ENCODE measurements at regions of chr16 and their contacts with region 1.

Region 1: GRCh38 chr16:28140788-28141618 is 70.8 kb downstream of the XPO6 start:
- DNase-seq: peak; percentile 91
- H3K4me3 Mint-ChIP-seq: peak overlapping the region; percentile 70
- H3K27ac Mint-ChIP-seq: peak overlapping the region; percentile 97
- H3K4me1 Mint-ChIP-seq: peaks cover 87% of the 10 kb centered on the region
- H3K27me3 Mint-ChIP-seq: no peaks in the 10 kb centered on the region

Region 2: GRCh38 chr16:28181515-28181914 is 40.5 kb after region 1 on chr16:
- CTCF ChIA-PET with region 1: interaction called, 4 read pairs
- intact Hi-C with region 1: loop called (anchors 1 kb)
- DNase-seq: no peak
- H3K4me3 Mint-ChIP-seq: no peak overlapping the region
- H3K27ac Mint-ChIP-seq: peak overlapping the region; percentile 91
- H3K4me1 Mint-ChIP-seq: peaks cover 80% of the 10 kb centered on the region
- H3K27me3 Mint-ChIP-seq: no peaks in the 10 kb centered on the region

Region 3: GRCh38 chr16:28193530-28194423 is 52.8 kb after region 1 on chr16:
- CTCF ChIA-PET with region 1: interaction called, 8 read pairs
- intact Hi-C with region 1: loop called (anchors 1 kb)
- DNase-seq: peak; percentile 77
- H3K4me3 Mint-ChIP-seq: peak overlapping the region; percentile 71
- H3K27ac Mint-ChIP-seq: peak overlapping the region; percentile 93
- H3K4me1 Mint-ChIP-seq: peaks cover 79% of the 10 kb centered on the region
- H3K27me3 Mint-ChIP-seq: no peaks in the 10 kb centered on the region

Region 4: DNA sequence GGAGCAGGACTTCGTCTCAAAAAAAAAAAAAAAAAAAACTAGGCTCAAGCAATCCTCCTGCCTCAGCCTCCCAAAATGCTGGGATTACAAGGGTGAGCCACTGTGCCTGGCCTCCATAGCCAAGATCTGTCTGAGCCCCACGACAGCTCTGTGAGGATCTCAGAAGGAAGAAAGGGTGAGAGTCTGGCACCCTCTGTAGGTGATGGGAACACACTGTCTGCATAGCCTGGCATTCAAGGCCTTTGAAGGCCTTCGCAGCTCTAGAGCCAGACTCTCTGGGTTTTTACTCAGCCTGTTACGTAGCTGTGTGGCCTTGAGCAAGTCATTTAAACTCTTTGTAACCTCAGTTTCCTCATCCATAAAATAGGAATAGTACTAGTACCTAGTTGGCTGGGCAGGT is 77.1 kb after region 1 on chr16:
- CTCF ChIA-PET with region 1: interaction called, 69 read pairs
- intact Hi-C with region 1: loop called (anchors 1 kb)
- DNase-seq: peak; percentile 83
- H3K4me3 Mint-ChIP-seq: no peak overlapping the region
- H3K27ac Mint-ChIP-seq: no peak overlapping the region
- H3K4me1 Mint-ChIP-seq: peaks cover 2% of the 10 kb centered on the region
- H3K27me3 Mint-ChIP-seq: no peaks in the 10 kb centered on the region

Region 5: GRCh38 chr16:28291873-28292660 is 151.1 kb after region 1 on chr16 and contains the start of gene SBK1:
- CTCF ChIA-PET with region 1: no interaction called
- intact Hi-C with region 1: no loop called
- DNase-seq: peak; percentile 78
- H3K4me3 Mint-ChIP-seq: peak within 1 kb of the TSS; percentile 87
- H3K27ac Mint-ChIP-seq: peak within 1 kb of the TSS; percentile 83
- H3K4me1 Mint-ChIP-seq: peaks cover 49% of the 10 kb centered on the region
- H3K27me3 Mint-ChIP-seq: no peaks in the 10 kb centered on the region
- total RNA-seq, gene SBK1: 2.8 to 3.4 TPM

Region 6: DNA sequence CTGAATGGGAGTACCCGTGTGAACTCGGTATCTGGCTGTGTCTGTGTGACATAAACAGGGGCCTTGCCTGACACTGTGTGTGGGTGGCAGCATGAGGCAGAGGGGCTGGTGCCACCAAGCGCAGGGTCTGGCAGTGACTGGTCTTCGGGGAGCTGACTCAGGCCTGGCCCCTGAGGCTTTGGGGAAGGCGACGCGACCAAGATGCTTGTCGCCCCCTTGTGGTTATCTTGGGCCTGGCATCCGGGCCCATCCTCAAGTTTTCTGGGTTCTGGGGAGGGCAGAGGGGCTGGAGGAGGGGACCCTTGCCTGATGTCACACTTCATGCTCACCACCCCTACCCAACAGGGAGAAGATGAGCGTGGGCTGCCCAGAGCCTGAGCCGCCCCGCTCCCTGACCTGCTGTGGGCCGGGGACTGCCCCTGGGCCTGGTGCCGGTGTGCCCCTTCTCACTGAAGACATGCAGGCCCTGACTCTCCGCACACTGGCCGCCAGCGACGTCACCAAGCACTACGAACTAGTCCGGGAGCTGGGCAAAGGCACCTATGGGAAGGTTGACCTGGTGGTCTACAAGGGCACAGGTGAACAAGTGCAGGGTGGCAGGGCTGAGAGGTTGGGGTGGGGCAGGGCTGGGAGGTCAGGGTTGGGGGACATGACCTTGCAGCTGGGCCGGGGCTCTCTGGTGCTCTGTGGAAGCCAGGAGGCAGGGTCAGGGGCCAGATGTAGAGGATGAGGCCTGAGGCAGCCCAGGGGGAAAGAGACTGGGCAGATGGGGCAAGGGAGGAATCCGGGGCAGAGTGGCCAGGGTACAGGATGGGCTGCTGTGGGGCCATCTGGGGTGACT is 176.3 kb after region 1 on chr16:
- CTCF ChIA-PET with region 1: no interaction called
- intact Hi-C with region 1: loop called (anchors 1 kb)
- DNase-seq: peak; percentile 82
- H3K4me3 Mint-ChIP-seq: no peak overlapping the region
- H3K27ac Mint-ChIP-seq: no peak overlapping the region
- H3K4me1 Mint-ChIP-seq: peaks cover 30% of the 10 kb centered on the region
- H3K27me3 Mint-ChIP-seq: no peaks in the 10 kb centered on the region

Measured in activated naive CD4-positive, alpha-beta T cell treated with anti-CD3 and anti-CD28 coated beads for 36 hours (primary cell).